ENCODE measurements at regions of chr2 and their contacts with region 1.

Region 1: GRCh38 chr2:96138179-96139145 is at the start of gene ASTL:
- DNase-seq: peak in 1 of 2 donors; percentile 86
- ATAC-seq: peak; percentile 38 to 61 (median 55)
- H3K4me3 ChIP-seq: no peak within 1 kb of the TSS
- H3K4me3 Mint-ChIP-seq: peak within 1 kb of the TSS; percentile 49
- H3K27ac ChIP-seq: no peak within 1 kb of the TSS
- H3K27ac Mint-ChIP-seq: peak within 1 kb of the TSS; percentile 61 to 82
- H3K4me1 ChIP-seq: peaks cover 48% of the 10 kb centered on the region
- H3K4me1 Mint-ChIP-seq: peaks cover 12 to 43% of the 10 kb centered on the region in 2 donors
- H3K27me3 ChIP-seq: no peaks in the 10 kb centered on the region
- H3K27me3 Mint-ChIP-seq: no peaks in the 10 kb centered on the region
- CTCF ChIP-seq: peak; percentile 66
- total RNA-seq, gene ASTL: 5.5 to 11.3 (median 8.8) TPM

Region 2: GRCh38 chr2:96099861-96100798 is 38.3 kb before region 1 on chr2:
- intact Hi-C with region 1: no loop called
- DNase-seq: peak in 1 of 2 donors; percentile 10
- ATAC-seq: no peak
- H3K4me3 ChIP-seq: no peak overlapping the region
- H3K4me3 Mint-ChIP-seq: no peak overlapping the region
- H3K27ac ChIP-seq: no peak overlapping the region
- H3K27ac Mint-ChIP-seq: no peak overlapping the region
- H3K4me1 ChIP-seq: no peaks in the 10 kb centered on the region
- H3K4me1 Mint-ChIP-seq: no peaks in the 10 kb centered on the region
- H3K27me3 ChIP-seq: no peaks in the 10 kb centered on the region
- H3K27me3 Mint-ChIP-seq: peaks cover 0 to 2% of the 10 kb centered on the region in 2 donors
- CTCF ChIP-seq: no peak

Region 3: DNA sequence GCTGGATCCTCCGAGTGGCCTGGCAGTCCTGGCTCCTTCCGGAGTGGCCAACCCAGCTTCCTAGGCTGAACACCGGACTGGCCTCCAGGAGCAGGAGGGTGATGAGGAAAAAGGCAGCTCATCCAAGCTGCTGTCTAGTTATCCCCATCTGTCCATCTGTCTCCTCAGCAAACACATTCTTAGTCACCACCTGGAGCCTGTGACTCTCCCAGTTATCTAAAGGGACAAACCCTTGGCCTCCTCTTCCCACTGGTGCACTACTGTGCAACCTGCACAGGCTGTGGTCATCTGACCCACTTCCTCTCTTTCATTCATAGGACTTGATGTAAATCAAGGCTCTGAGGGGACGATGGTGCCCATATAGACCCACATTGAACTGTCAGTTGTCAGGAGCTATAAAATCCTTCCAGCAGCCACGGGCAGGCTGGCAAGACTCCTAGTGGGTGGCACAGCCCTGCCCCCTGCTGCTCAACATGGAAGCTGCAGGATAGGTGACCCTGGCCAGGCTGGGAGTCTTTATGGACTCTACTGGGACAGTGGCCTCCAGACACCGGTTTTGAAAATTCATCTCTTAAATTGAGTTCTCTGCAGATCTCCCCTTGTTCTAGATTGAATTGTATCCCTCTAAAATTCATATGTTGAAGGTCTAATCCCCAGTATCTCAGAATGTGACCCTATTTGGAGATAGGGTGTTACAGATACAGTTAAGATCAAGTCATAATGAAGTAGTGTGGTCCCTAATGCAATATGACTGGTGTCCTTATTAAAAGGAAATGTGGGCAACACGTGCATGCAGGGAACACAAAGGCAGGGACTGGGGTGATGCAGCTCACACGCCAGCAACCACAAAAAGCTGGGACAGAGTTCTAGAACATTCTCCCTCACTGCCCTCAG is 36.0 kb after region 1 on chr2:
- intact Hi-C with region 1: loop called (anchors 1 kb)
- DNase-seq: peak; percentile 80 to 90
- ATAC-seq: peak; percentile 94 to 100 (median 100)
- H3K4me3 ChIP-seq: no peak overlapping the region
- H3K4me3 Mint-ChIP-seq: no peak overlapping the region
- H3K27ac ChIP-seq: no peak overlapping the region
- H3K27ac Mint-ChIP-seq: peak overlapping the region in 1 of 2 donors; percentile 19
- H3K4me1 ChIP-seq: peaks cover 7% of the 10 kb centered on the region
- H3K4me1 Mint-ChIP-seq: peaks cover 8% of the 10 kb centered on the region in 2 donors
- H3K27me3 ChIP-seq: no peaks in the 10 kb centered on the region
- H3K27me3 Mint-ChIP-seq: peaks cover 0 to 2% of the 10 kb centered on the region in 2 donors
- CTCF ChIP-seq: peak; percentile 91

Measured in natural killer cell (primary cell).